PC-3 (cell line): ENCODE measurements at regions of chr7 and their contacts with region 1.

Region 1: DNA sequence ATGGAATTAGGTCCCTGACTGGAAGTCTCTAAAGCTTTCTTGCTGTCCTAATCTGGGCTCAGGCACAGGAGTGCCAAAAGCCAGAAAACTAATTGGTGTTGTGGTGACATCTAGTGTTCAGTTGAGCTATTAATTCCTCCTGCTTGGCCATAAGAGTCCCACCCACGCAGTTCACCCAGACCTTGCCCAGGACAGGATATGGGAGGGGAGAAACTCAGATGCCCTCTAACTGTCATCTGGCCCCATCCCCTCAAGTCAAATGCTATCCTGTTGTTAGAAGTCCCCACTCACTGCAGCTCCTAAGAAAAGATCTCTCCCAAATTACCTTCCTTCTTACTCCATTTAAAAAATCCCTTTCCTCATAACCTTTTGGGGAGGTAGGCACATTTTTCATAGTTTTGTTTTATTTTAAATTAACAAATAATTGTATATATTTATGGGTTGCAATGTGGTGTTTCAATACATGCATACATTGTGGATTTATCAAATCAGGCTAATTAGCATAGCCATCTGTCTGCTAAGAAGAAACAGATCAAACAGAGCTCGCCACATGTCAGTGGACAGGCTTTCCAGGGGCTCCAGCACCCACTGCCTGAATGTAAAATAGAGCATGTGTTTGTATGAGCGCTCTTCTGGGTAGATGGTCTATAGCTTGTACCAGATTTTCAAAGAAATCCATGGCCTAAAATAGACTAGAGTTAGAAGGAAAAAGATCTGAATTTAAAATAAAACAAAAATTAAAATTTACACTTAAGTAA is 84.0 kb downstream of the GSAP start:
- DNase-seq: peak; percentile 90
- ATAC-seq: peak; percentile 74
- H3K4me3 ChIP-seq: no peak overlapping the region
- H3K27ac ChIP-seq: no peak overlapping the region
- H3K4me1 ChIP-seq: peaks cover 45% of the 10 kb centered on the region
- H3K27me3 ChIP-seq: no peaks in the 10 kb centered on the region
- CTCF ChIP-seq: peak; percentile 74

Region 2: DNA sequence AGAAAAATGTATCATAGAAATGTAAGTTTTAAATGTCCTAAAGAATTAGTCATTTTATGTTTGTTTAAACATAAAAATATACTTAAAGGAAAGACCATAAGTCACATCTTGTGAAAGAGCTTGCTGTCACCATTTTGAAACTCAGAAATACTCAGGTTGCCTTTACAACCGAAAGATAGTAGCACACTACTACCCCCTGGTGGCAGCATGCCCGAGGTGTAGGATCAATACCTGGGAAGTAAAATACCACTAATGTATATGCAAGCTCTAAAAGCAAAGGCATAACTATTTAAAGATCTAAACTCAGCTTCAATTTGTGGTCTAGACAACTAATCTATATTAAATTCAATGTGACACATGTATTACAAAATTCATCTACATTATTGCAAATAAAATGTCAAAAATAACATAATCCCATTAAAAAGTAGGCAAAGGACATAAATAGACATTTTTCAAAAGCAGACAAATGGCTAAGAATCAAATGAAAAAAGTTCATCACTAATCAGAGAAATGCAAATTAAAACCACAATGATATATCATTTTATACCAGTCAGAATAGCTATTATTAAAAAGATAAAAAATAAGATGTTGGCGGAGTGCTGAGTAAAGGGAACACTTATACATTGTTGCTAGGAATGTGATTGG is 84.8 kb before region 1 on chr7:
- CTCF ChIA-PET with region 1: interaction called, 42 read pairs
- POLR2A ChIA-PET with region 1: no interaction called
- intact Hi-C with region 1: loop called (anchors 1 kb)
- DNase-seq: peak; percentile 87
- ATAC-seq: peak; percentile 77
- H3K4me3 ChIP-seq: no peak overlapping the region
- H3K27ac ChIP-seq: no peak overlapping the region
- H3K4me1 ChIP-seq: no peaks in the 10 kb centered on the region; the same call in 1 of the 2 replicates
- H3K27me3 ChIP-seq: no peaks in the 10 kb centered on the region
- CTCF ChIP-seq: peak; percentile 90

Region 3: GRCh38 chr7:77308795-77309194 is 23.3 kb before region 1 on chr7:
- CTCF ChIA-PET with region 1: no interaction called
- POLR2A ChIA-PET with region 1: no interaction called
- intact Hi-C with region 1: loop called (anchors 1 kb)
- DNase-seq: no peak
- ATAC-seq: no peak
- H3K4me3 ChIP-seq: no peak overlapping the region
- H3K27ac ChIP-seq: peak overlapping the region; percentile 82
- H3K4me1 ChIP-seq: peaks cover 32% of the 10 kb centered on the region
- H3K27me3 ChIP-seq: no peaks in the 10 kb centered on the region
- CTCF ChIP-seq: no peak